CD4-positive, alpha-beta T cell (primary cell): ENCODE measurements at regions of chr1 and their contacts with region 1.

Region 1: GRCh38 chr1:116418091-116418830 is 45.2 kb downstream of the ATP1A1 start:
- DNase-seq: peak; percentile 79 to 93 (median 85)
- ATAC-seq: peak; percentile 96
- H3K4me3 ChIP-seq: peak overlapping the region; percentile 94
- H3K4me3 Mint-ChIP-seq: peak overlapping the region; percentile 90
- H3K27ac ChIP-seq: peak overlapping the region; percentile 72 to 78
- H3K27ac Mint-ChIP-seq: peak overlapping the region; percentile 97
- H3K4me1 ChIP-seq: peaks cover 22% of the 10 kb centered on the region
- H3K4me1 Mint-ChIP-seq: peaks cover 32% of the 10 kb centered on the region
- H3K27me3 ChIP-seq: no peaks in the 10 kb centered on the region
- H3K27me3 Mint-ChIP-seq: no peaks in the 10 kb centered on the region
- CTCF ChIP-seq: no peak

Region 2: GRCh38 chr1:116168277-116169097 is 249.8 kb before region 1 on chr1:
- CTCF ChIA-PET with region 1: no interaction called
- POLR2A ChIA-PET with region 1: interaction called, 3 read pairs
- intact Hi-C with region 1: loop called in 1 of 2 experiments (anchors 1 kb)
- DNase-seq: peak; percentile 73 to 93 (median 84)
- ATAC-seq: peak; percentile 99
- H3K4me3 ChIP-seq: peak overlapping the region; percentile 63
- H3K4me3 Mint-ChIP-seq: peak overlapping the region; percentile 86
- H3K27ac ChIP-seq: peak overlapping the region in 1 of 2 donors; percentile 26
- H3K27ac Mint-ChIP-seq: peak overlapping the region; percentile 66
- H3K4me1 ChIP-seq: peaks cover 20% of the 10 kb centered on the region
- H3K4me1 Mint-ChIP-seq: peaks cover 21% of the 10 kb centered on the region
- H3K27me3 ChIP-seq: no peaks in the 10 kb centered on the region
- H3K27me3 Mint-ChIP-seq: no peaks in the 10 kb centered on the region
- CTCF ChIP-seq: peak; percentile 94

Region 3: GRCh38 chr1:116372587-116373444 is 45.4 kb before region 1 on chr1 and contains the start of gene ATP1A1:
- CTCF ChIA-PET with region 1: no interaction called
- POLR2A ChIA-PET with region 1: interaction called, 32 read pairs
- intact Hi-C with region 1: loop called (anchors 1 to 5 kb)
- DNase-seq: peak; percentile 95 to 100 (median 98)
- ATAC-seq: peak; percentile 66
- H3K4me3 ChIP-seq: peak within 1 kb of the TSS; percentile 77
- H3K4me3 Mint-ChIP-seq: peak within 1 kb of the TSS; percentile 98
- H3K27ac ChIP-seq: peak within 1 kb of the TSS; percentile 88 to 98
- H3K27ac Mint-ChIP-seq: peak within 1 kb of the TSS; percentile 93
- H3K4me1 ChIP-seq: peaks cover 37% of the 10 kb centered on the region
- H3K4me1 Mint-ChIP-seq: peaks cover 58% of the 10 kb centered on the region
- H3K27me3 ChIP-seq: no peaks in the 10 kb centered on the region
- H3K27me3 Mint-ChIP-seq: no peaks in the 10 kb centered on the region
- CTCF ChIP-seq: no peak
- total RNA-seq, gene ATP1A1: 251 to 262 TPM

Region 4: GRCh38 chr1:116405241-116406135 is 12.8 kb before region 1 on chr1:
- CTCF ChIA-PET with region 1: no interaction called
- POLR2A ChIA-PET with region 1: interaction called, 16 read pairs
- intact Hi-C with region 1: no loop called
- DNase-seq: no peak
- ATAC-seq: no peak
- H3K4me3 ChIP-seq: no peak overlapping the region
- H3K4me3 Mint-ChIP-seq: no peak overlapping the region
- H3K27ac ChIP-seq: no peak overlapping the region
- H3K27ac Mint-ChIP-seq: peak overlapping the region; percentile 67
- H3K4me1 ChIP-seq: peaks cover 8% of the 10 kb centered on the region
- H3K4me1 Mint-ChIP-seq: peaks cover 19% of the 10 kb centered on the region
- H3K27me3 ChIP-seq: no peaks in the 10 kb centered on the region
- H3K27me3 Mint-ChIP-seq: no peaks in the 10 kb centered on the region
- CTCF ChIP-seq: no peak

Region 5: DNA sequence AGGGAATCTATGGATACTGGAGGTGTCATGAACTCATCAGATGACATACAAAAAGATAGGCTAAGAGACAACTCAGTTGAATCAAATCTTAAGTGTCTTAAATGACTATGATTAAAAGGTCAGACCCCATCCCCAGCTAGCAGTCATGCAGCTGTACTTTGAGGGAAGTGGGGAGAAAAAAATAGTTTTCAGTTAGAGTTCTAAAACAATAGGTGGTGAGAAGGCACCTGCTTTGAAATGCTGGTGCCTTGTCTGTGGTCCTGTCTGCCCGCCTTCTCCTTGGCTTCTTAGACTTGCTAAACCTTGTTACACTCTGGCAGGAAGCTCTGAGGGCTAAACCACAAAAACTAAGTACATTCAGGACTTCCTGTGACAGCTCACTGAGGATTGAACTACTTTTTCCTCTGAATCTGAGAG is 351.3 kb after region 1 on chr1:
- CTCF ChIA-PET with region 1: no interaction called
- POLR2A ChIA-PET with region 1: no interaction called
- intact Hi-C with region 1: loop called in 1 of 2 experiments (anchors 5 kb)
- DNase-seq: peak in 13 of 14 experiments; percentile 60 to 94 (median 68)
- ATAC-seq: peak; percentile 79
- H3K4me3 ChIP-seq: no peak overlapping the region
- H3K4me3 Mint-ChIP-seq: peak overlapping the region; percentile 66
- H3K27ac ChIP-seq: peak overlapping the region; percentile 88 to 89
- H3K27ac Mint-ChIP-seq: peak overlapping the region; percentile 99
- H3K4me1 ChIP-seq: peaks cover 74% of the 10 kb centered on the region
- H3K4me1 Mint-ChIP-seq: peaks cover 97% of the 10 kb centered on the region
- H3K27me3 ChIP-seq: no peaks in the 10 kb centered on the region
- H3K27me3 Mint-ChIP-seq: no peaks in the 10 kb centered on the region
- CTCF ChIP-seq: no peak